ENCODE measurements at regions of chr9 and their contacts with region 1.

Region 1: GRCh38 chr9:76393963-76394679 is at the start of gene RFK:
- DNase-seq: peak; percentile 96
- ATAC-seq: peak; percentile 89
- H3K4me3 Mint-ChIP-seq: peak within 1 kb of the TSS; percentile 85
- H3K27ac Mint-ChIP-seq: peak within 1 kb of the TSS; percentile 95
- H3K4me1 Mint-ChIP-seq: peaks cover 26% of the 10 kb centered on the region
- H3K27me3 Mint-ChIP-seq: no peaks in the 10 kb centered on the region
- total RNA-seq, gene RFK: 7.0 to 8.3 TPM

Region 2: DNA sequence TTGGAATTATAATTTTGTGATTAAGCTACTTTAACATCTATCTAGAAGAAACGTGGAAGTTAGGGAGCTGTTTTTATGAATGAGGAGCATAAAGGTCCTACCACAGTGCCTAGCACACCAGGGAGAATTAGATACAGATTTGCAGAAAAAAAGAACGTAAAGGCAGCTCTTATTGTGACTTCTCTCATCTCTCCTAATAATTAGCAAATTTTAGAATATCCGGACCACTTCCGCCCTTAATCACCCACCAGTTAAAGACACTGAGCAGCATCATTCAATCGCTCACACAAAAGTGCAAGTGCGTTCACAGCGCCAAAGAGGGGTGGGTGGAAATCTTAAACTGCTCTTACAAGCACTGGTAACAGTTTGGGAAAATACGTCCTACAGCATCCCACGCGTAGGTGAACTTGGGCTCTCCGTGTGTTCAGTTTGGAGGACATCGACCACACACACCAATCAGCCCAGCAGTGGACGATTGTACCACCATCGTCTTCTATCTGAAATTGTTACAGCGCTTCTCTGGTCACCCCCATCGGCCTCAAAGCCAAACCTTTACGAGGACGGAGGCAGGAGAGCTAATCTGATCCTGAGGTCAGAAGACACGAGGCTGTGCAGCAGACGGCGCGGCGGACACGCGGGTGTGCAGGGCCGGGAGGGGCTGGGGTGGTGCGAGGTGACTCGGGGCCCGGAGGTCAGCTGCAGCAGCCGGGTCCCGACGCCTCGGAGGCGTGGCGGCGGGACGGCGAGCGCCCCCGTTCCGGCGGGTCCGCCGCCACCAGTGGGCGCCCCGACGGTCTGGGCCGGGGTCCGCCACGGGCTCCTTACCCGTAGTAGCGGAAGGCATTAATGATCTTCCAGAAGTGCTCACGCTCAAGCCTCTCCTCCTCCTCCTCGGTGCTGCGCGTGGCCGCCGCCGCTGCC is 1366.7 kb before region 1 on chr9:
- CTCF ChIA-PET with region 1: no interaction called
- POLR2A ChIA-PET with region 1: no interaction called
- intact Hi-C with region 1: loop called in 1 of 2 experiments (anchors 5 kb)
- DNase-seq: peak; percentile 72
- ATAC-seq: peak; percentile 34
- H3K4me3 Mint-ChIP-seq: peak overlapping the region; percentile 98
- H3K27ac Mint-ChIP-seq: peak overlapping the region; percentile 99
- H3K4me1 Mint-ChIP-seq: peaks cover 33% of the 10 kb centered on the region
- H3K27me3 Mint-ChIP-seq: no peaks in the 10 kb centered on the region

Region 3: DNA sequence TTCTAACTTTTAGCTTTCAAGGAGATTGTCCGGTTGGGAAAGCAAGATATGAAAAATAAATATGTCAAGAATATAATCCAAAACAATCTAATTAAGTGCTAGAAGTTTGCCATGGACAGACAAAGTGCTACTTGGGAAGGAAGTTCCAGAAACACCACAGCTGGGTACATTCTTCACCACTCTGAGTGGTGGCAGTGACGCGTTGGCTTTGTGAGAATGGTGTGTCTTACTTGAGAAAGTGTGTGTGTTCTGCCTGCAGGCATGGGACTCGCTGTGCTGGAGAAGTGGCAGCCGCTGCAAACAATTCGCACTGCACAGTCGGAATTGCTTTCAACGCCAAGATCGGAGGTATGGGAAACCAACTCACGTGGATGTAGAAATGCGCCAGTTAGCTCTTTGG is 326.4 kb before region 1 on chr9:
- CTCF ChIA-PET with region 1: no interaction called
- POLR2A ChIA-PET with region 1: no interaction called
- intact Hi-C with region 1: no loop called
- DNase-seq: no peak
- ATAC-seq: no peak
- H3K4me3 Mint-ChIP-seq: no peak overlapping the region
- H3K27ac Mint-ChIP-seq: no peak overlapping the region
- H3K4me1 Mint-ChIP-seq: no peaks in the 10 kb centered on the region
- H3K27me3 Mint-ChIP-seq: no peaks in the 10 kb centered on the region

Region 4: DNA sequence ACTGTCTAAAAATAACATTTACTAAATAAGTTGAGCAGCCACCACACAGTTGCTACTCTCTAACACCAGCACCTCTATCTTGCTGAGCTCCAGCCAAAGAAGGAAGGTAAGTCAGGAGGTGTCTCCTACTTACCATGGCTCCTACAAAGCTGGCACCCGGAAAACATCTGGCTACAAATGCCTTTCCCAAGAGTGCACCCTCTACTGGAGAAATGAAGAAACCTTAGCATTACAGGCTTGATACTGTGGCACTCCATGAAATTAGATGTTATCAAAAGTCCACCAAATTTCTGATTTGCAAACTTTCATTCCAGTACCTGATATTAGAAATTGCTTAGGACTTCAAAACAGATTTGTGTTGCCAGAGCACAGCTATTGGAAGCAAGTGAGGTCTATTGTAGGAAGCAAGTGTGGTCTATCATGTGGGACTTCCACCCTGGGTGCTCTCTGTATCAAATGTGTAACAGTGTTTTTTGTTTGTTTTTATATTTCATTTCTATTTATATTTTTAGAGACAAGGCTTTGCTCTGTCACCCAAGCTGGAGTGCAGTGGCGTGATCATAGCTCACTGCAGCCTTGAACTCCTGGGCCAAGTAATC is 25.8 kb after region 1 on chr9:
- CTCF ChIA-PET with region 1: interaction called, 10 read pairs
- POLR2A ChIA-PET with region 1: no interaction called
- intact Hi-C with region 1: no loop called
- DNase-seq: no peak
- ATAC-seq: no peak
- H3K4me3 Mint-ChIP-seq: no peak overlapping the region
- H3K27ac Mint-ChIP-seq: no peak overlapping the region
- H3K4me1 Mint-ChIP-seq: peaks cover 22% of the 10 kb centered on the region
- H3K27me3 Mint-ChIP-seq: peaks cover 2% of the 10 kb centered on the region

Region 5: DNA sequence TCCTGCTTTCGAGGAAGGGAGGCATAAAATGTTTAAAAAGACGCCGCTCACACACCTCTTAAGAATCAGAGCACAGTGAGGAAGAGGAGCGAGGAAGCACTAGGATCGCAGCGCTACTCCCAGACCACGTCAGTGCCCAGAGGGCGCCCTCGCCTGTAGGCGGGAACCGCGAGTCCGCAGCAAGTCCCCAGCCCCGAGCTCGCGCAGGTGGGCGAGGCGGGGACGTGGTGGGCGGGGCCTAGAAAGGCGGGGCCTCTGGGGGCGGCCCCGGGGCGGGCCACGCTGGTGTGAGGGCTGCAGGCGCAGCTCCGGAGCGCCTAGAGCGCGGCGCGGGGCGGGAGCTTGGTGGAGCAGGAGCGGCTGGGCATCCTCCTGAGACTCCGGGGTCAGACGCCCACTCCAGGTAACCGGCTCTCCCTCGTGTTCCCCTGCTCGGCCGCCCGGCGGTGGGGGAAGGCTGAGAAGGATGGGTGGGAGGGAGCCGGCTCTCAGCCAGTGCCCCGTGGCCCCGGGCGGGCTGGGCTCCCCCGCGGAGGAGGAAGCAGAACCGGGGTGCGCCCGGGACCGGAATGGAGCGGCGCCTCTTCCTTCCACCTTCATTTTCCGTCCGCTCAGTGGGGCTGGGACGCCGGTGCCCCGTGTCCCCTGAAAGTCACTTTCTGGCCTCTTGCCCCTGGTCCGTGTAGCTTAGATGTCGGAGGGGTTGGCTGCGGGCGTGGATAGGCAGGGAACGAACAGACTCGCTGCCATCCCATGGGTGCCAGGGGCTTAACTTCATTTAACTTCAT is 65.0 kb after region 1 on chr9 and contains the start of gene GCNT1:
- CTCF ChIA-PET with region 1: interaction called, 6 read pairs
- POLR2A ChIA-PET with region 1: interaction called, 4 read pairs
- intact Hi-C with region 1: loop called (anchors 1 kb)
- DNase-seq: peak; percentile 95
- ATAC-seq: peak; percentile 96
- H3K4me3 Mint-ChIP-seq: peak within 1 kb of the TSS; percentile 85
- H3K27ac Mint-ChIP-seq: peak within 1 kb of the TSS; percentile 77
- H3K4me1 Mint-ChIP-seq: peaks cover 26% of the 10 kb centered on the region
- H3K27me3 Mint-ChIP-seq: no peaks in the 10 kb centered on the region
- total RNA-seq, gene GCNT1: 4.2 to 4.6 TPM

Region 6: DNA sequence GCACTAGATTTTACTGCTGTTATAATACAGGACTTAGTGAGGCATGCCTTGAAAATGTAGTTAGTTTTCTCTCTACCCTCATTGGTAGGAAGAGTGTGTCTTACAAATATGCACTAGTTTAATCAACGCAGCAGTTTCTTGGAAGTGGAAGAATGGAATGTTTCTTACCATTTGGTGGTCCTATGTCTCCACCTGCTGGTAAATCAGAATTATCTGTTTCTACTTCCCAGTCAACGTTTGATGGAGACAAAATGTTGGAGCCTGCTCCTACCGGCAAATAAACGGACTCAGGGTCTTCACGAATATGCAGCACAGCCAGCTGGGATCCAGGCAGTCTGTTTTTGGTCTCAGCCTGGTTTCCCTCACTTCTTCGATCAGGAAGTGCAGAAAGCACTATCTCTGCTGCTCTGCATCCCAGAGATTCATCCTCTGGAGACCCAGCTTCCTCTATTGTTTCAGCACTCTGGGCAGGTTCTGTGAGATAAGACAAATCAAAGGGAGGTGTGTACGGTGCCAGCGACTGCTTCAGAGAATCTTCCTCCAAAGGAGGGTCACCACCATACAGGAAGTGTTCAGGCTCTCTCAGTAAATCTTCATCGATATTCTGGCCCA is 310.6 kb after region 1 on chr9:
- CTCF ChIA-PET with region 1: interaction called, 3 read pairs
- POLR2A ChIA-PET with region 1: interaction called, 6 read pairs
- intact Hi-C with region 1: loop called in 1 of 2 experiments (anchors 2 kb)
- DNase-seq: no peak
- ATAC-seq: no peak
- H3K4me3 Mint-ChIP-seq: no peak overlapping the region
- H3K27ac Mint-ChIP-seq: no peak overlapping the region
- H3K4me1 Mint-ChIP-seq: no peaks in the 10 kb centered on the region
- H3K27me3 Mint-ChIP-seq: peaks cover 24% of the 10 kb centered on the region

Region 7: DNA sequence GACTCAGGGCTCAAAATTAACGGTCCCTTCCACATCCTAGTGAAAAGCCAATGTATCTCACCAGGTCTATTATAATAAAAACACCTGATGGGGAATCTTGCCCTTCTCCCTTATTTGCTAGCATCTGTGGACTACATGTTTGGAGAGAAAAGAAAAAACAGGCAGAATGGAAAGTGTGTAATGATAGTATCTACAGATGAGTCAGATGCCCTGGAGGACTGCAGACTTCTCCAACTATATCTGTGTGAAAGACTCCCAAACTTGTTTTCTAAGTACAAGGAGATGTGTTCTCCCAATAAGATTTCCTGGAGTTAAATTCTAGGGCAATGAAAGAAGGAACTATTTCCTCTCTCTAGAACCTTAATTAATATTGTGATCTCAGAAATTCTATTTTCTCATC is 691.3 kb after region 1 on chr9:
- CTCF ChIA-PET with region 1: no interaction called
- POLR2A ChIA-PET with region 1: no interaction called
- intact Hi-C with region 1: no loop called
- DNase-seq: no peak
- ATAC-seq: no peak
- H3K4me3 Mint-ChIP-seq: no peak overlapping the region
- H3K27ac Mint-ChIP-seq: no peak overlapping the region
- H3K4me1 Mint-ChIP-seq: no peaks in the 10 kb centered on the region
- H3K27me3 Mint-ChIP-seq: peaks cover 13% of the 10 kb centered on the region

Region 8: GRCh38 chr9:77177161-77177893 is 783.2 kb after region 1 on chr9 and contains the start of gene VPS13A:
- CTCF ChIA-PET with region 1: no interaction called
- POLR2A ChIA-PET with region 1: no interaction called
- intact Hi-C with region 1: loop called (anchors 2 to 5 kb)
- DNase-seq: peak; percentile 98
- ATAC-seq: peak; percentile 92
- H3K4me3 Mint-ChIP-seq: peak within 1 kb of the TSS; percentile 97
- H3K27ac Mint-ChIP-seq: peak within 1 kb of the TSS; percentile 93
- H3K4me1 Mint-ChIP-seq: peaks cover 23% of the 10 kb centered on the region
- H3K27me3 Mint-ChIP-seq: no peaks in the 10 kb centered on the region
- total RNA-seq, gene VPS13A: 33.3 to 33.6 TPM